ENCODE measurements at regions of chr16 and their contacts with region 1.

Region 1: GRCh38 chr16:67561824-67562525 is 351 bp upstream of the CTCF start:
- DNase-seq: peak; percentile 93 to 99 (median 96)
- ATAC-seq: peak; percentile 77
- H3K4me3 ChIP-seq: peak overlapping the region; percentile 65 to 73
- H3K4me3 Mint-ChIP-seq: peak overlapping the region; percentile 82
- H3K27ac ChIP-seq: peak overlapping the region; percentile 71 to 90
- H3K27ac Mint-ChIP-seq: peak overlapping the region; percentile 96
- H3K4me1 ChIP-seq: peaks cover 35% of the 10 kb centered on the region
- H3K4me1 Mint-ChIP-seq: peaks cover 53% of the 10 kb centered on the region
- H3K27me3 ChIP-seq: no peaks in the 10 kb centered on the region
- H3K27me3 Mint-ChIP-seq: no peaks in the 10 kb centered on the region
- CTCF ChIP-seq: no peak

Region 2: DNA sequence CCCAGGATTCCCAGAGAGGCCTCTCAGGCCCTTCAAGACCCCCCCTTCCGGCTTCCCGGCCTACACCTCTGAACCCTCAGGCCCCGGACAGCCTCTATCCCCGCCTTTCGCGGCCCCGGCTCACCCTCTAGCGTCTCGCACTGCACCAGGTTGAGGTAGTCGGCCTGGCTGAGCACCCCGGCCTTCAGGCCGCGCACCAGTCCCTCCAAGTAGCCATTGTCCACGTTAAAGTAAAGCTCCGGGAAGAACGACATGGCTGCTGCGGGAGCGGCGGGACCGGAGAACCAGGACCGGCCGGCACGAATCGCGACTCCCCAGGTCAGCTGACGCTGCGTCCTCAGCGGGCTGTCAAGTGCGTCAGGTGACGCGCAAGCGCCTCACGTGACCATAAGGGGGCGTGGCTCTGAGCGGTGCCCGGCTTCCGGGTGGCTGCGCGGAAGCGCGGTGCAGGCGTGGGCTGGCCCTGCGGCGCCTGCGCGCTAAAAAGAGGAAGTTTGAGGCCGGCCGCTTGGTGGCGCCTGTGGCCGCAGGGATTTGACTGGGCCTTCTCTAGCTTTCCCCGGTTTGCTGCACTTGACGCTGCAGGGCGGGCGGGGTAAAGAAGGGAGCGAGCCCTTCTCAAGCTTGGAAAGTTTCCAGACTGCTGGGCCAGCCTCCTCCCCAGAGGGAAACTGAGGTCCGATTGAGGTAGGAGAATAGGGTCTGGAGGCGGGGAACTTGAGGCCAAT is 81.0 kb before region 1 on chr16 and contains the start of gene ATP6V0D1:
- CTCF ChIA-PET with region 1: interaction called, 5 read pairs
- POLR2A ChIA-PET with region 1: interaction called, 14 read pairs
- intact Hi-C with region 1: loop called in 1 of 2 experiments (anchors 1 kb)
- DNase-seq: peak; percentile 98 to 99 (median 99)
- ATAC-seq: peak; percentile 90
- H3K4me3 ChIP-seq: peak within 1 kb of the TSS; percentile 91 to 100
- H3K4me3 Mint-ChIP-seq: peak within 1 kb of the TSS; percentile 99
- H3K27ac ChIP-seq: peak within 1 kb of the TSS; percentile 96 to 100
- H3K27ac Mint-ChIP-seq: peak within 1 kb of the TSS; percentile 99
- H3K4me1 ChIP-seq: peaks cover 30% of the 10 kb centered on the region
- H3K4me1 Mint-ChIP-seq: peaks cover 49% of the 10 kb centered on the region
- H3K27me3 ChIP-seq: no peaks in the 10 kb centered on the region
- H3K27me3 Mint-ChIP-seq: no peaks in the 10 kb centered on the region
- CTCF ChIP-seq: peak; percentile 87
- total RNA-seq, gene ATP6V0D1: 56.3 to 62.0 TPM

Region 3: DNA sequence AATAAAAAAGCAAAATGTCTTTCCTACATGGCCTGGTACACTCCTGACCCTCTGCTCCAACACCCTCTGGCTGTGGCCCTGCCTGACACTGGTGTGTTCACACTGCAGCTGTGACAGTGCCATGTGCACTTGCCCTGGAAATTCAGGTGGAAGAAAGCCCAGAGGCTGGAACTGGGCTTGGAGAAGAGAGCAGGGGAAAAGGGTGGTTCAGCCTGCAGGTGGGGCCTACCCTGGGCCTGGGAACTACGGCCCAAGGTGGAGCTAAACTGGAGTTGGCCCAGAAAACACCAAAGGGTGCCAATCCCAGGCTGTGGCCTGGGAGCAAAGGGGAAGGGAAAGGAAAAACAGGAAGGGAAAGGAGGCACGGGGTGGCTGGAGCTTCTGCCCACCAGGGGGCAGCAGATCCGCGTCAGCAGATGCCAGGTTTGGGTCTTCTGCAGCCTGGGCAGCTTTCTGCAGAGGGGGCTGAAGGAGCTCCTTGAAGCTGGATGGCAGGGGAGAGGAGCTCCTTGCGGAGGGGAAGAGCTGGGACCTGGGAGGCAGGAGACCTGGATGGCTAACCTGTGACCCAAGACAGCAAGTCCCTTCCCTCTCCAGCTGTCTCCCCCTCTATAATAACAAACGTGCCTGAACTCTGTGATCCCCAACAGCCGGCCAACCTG is 15.1 kb before region 1 on chr16:
- CTCF ChIA-PET with region 1: interaction called, 271 read pairs
- POLR2A ChIA-PET with region 1: interaction called, 116 read pairs
- intact Hi-C with region 1: loop called (anchors 1 kb)
- DNase-seq: peak; percentile 42 to 87 (median 77)
- ATAC-seq: peak; percentile 24
- H3K4me3 ChIP-seq: peak overlapping the region in 1 of 2 experiments; percentile 51
- H3K4me3 Mint-ChIP-seq: peak overlapping the region; percentile 75
- H3K27ac ChIP-seq: peak overlapping the region; percentile 36 to 57
- H3K27ac Mint-ChIP-seq: peak overlapping the region; percentile 94
- H3K4me1 ChIP-seq: peaks cover 42% of the 10 kb centered on the region
- H3K4me1 Mint-ChIP-seq: peaks cover 53% of the 10 kb centered on the region
- H3K27me3 ChIP-seq: no peaks in the 10 kb centered on the region
- H3K27me3 Mint-ChIP-seq: no peaks in the 10 kb centered on the region
- CTCF ChIP-seq: peak; percentile 99

Region 4: GRCh38 chr16:67660564-67661028 is 98.6 kb after region 1 on chr16 and contains the start of gene PARD6A:
- CTCF ChIA-PET with region 1: interaction called, 7 read pairs
- POLR2A ChIA-PET with region 1: interaction called, 18 read pairs
- intact Hi-C with region 1: loop called (anchors 1 kb)
- DNase-seq: peak; percentile 89 to 99 (median 95)
- ATAC-seq: peak; percentile 76
- H3K4me3 ChIP-seq: peak within 1 kb of the TSS; percentile 83 to 100
- H3K4me3 Mint-ChIP-seq: peak within 1 kb of the TSS; percentile 94
- H3K27ac ChIP-seq: peak within 1 kb of the TSS; percentile 92 to 100
- H3K27ac Mint-ChIP-seq: peak within 1 kb of the TSS; percentile 93
- H3K4me1 ChIP-seq: peaks cover 20% of the 10 kb centered on the region
- H3K4me1 Mint-ChIP-seq: peaks cover 23% of the 10 kb centered on the region
- H3K27me3 ChIP-seq: no peaks in the 10 kb centered on the region
- H3K27me3 Mint-ChIP-seq: no peaks in the 10 kb centered on the region
- CTCF ChIP-seq: no peak
- total RNA-seq, gene PARD6A: 3.0 to 3.1 TPM

Region 5: GRCh38 chr16:67719048-67719777 is 157.2 kb after region 1 on chr16 and contains the start of gene GFOD2:
- CTCF ChIA-PET with region 1: no interaction called
- POLR2A ChIA-PET with region 1: no interaction called
- intact Hi-C with region 1: loop called in 1 of 2 experiments (anchors 1 kb)
- DNase-seq: peak; percentile 95 to 100 (median 97)
- ATAC-seq: peak; percentile 96
- H3K4me3 ChIP-seq: peak within 1 kb of the TSS; percentile 68 to 90
- H3K4me3 Mint-ChIP-seq: peak within 1 kb of the TSS; percentile 98
- H3K27ac ChIP-seq: peak within 1 kb of the TSS; percentile 85 to 96
- H3K27ac Mint-ChIP-seq: peak within 1 kb of the TSS; percentile 99
- H3K4me1 ChIP-seq: peaks cover 15% of the 10 kb centered on the region
- H3K4me1 Mint-ChIP-seq: peaks cover 32% of the 10 kb centered on the region
- H3K27me3 ChIP-seq: no peaks in the 10 kb centered on the region
- H3K27me3 Mint-ChIP-seq: no peaks in the 10 kb centered on the region
- CTCF ChIP-seq: no peak
- total RNA-seq, gene GFOD2: 2.4 to 2.6 TPM

Region 6: DNA sequence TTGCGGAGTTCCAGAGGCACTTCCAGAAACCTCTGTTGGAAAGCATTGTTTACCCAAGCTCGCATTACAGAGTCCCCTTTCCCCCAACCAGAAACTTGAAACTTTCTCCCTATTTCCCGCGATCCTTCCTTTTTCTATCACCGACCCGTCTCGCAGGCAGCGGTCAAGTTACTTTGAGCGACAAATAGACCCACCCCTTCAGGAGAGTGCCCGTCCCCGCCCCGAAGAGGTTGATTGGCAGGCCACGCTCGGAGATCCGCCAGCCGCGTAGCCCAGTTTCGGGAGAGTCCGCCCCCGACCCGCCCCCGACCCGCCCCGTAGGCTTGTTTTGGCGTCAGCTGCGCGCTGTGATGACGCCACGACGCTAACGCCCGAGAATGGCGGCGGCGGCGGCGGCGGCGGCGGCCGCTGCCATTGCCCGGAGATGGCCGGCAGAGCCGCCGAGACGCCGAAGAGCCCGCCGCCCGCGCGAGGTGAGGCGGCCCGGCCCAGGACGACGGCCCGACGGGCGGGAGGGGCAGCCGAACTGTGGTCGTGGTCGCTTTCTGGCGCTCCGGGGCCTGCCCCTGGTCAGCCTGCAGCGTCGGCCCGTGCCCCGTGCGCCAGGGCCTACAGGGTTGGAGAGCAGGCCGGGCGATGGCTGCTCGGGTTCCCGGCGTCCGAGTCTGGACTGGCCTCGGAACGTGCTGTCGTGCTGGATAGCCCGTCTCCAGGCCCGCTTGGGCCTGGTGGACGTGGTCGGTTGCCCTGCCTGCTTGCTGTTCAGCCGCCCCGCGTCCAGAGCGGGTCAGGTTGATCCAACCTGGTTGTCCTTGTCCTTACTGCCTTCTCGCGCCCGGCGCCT is 331.1 kb after region 1 on chr16 and contains the start of gene PSKH1:
- CTCF ChIA-PET with region 1: no interaction called
- POLR2A ChIA-PET with region 1: no interaction called
- intact Hi-C with region 1: loop called in 1 of 2 experiments (anchors 5 kb)
- DNase-seq: peak; percentile 89 to 96 (median 93)
- ATAC-seq: peak; percentile 99
- H3K4me3 ChIP-seq: peak within 1 kb of the TSS; percentile 81 to 93
- H3K4me3 Mint-ChIP-seq: peak within 1 kb of the TSS; percentile 95
- H3K27ac ChIP-seq: peak within 1 kb of the TSS; percentile 90 to 93
- H3K27ac Mint-ChIP-seq: peak within 1 kb of the TSS; percentile 96
- H3K4me1 ChIP-seq: peaks cover 24% of the 10 kb centered on the region
- H3K4me1 Mint-ChIP-seq: peaks cover 40% of the 10 kb centered on the region
- H3K27me3 ChIP-seq: no peaks in the 10 kb centered on the region
- H3K27me3 Mint-ChIP-seq: no peaks in the 10 kb centered on the region
- CTCF ChIP-seq: no peak
- total RNA-seq, gene PSKH1: 13.3 to 13.4 TPM

Region 7: DNA sequence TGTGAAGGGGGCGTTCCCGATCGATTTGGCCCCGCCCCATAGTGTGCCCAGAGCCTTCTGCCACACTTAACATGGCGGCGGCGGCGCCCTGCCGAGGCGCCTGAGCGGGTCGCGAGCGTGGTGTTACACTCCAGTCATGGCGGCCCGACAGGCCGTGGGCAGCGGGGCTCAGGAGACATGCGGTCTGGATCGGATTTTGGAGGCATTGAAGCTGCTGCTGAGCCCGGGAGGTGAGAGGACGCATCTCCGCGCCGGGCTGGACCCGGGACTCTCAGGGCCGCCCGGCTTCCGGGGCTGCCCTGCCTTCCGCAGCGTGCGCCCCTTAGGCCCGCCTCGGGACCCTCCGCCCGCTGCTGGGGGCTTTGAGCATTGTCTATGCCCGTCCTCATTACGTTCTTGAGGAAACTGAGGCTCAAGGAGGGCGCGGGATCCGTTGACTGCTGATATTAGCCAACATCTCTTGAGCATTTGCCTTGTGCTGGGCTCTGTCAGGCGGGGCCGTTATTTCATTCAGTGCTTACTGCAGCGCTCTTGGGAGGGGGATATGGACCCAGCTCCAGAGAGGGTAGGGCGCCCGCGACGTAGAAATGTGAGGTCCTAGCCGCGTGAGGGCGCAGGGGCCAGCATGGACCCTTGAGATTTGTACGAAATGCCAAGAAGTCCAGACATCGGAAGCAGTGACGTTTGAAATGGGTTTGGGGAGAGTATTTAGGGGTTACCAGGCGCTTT is 1281.7 kb after region 1 on chr16 and contains the start of gene TANGO6:
- CTCF ChIA-PET with region 1: no interaction called
- POLR2A ChIA-PET with region 1: no interaction called
- intact Hi-C with region 1: loop called in 1 of 2 experiments (anchors 5 kb)
- DNase-seq: peak; percentile 81 to 93 (median 90)
- ATAC-seq: peak; percentile 95
- H3K4me3 ChIP-seq: peak within 1 kb of the TSS; percentile 86 to 94
- H3K4me3 Mint-ChIP-seq: peak within 1 kb of the TSS; percentile 92
- H3K27ac ChIP-seq: peak within 1 kb of the TSS; percentile 78 to 86
- H3K27ac Mint-ChIP-seq: peak within 1 kb of the TSS; percentile 89
- H3K4me1 ChIP-seq: peaks cover 24% of the 10 kb centered on the region
- H3K4me1 Mint-ChIP-seq: peaks cover 29% of the 10 kb centered on the region
- H3K27me3 ChIP-seq: no peaks in the 10 kb centered on the region
- H3K27me3 Mint-ChIP-seq: no peaks in the 10 kb centered on the region
- CTCF ChIP-seq: no peak
- total RNA-seq, gene TANGO6: 12.1 to 16.3 TPM

Measured in CD8-positive, alpha-beta T cell (primary cell).